ENCODE measurements at regions of chr19 and their contacts with region 1.

Region 1: DNA sequence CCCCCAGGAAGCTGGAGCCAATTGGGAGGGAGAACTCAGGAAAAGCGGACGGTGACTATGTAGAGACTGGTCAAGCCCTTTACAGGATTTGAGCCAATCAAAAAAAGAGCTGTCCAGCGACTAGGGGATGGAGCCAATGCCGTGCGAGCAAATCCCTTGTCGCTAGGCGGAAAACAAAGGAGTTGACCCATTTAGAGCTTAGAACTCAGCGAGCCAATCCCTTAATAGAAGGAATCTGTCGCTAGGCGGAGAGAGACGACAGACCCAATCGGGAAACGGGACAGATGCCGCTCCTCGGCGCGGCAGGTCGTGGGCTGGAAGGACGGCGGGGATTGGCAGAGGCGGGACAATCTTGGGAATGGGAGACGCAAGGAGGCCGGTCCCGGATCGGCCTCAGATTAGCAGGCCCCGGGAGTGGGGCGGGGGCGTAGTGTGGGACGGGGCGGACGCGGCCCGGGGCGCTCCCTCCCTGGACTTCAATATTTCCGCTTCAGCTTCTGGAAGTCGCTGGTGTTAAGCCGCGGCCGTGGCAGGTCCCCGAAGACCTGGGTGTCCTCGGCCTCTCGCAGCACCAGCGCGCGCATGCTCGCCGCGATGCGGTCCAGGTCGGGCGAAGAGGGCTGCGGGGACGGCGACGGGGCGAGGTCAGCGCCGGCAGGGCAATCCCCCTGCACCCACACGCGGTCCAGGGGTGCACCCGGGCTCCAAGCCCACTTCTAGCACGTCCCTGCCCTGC is 2.2 kb upstream of the PNKP start:
- DNase-seq: peak; percentile 97
- H3K4me3 ChIP-seq: peak overlapping the region; percentile 55
- H3K27ac ChIP-seq: peak overlapping the region; percentile 91
- H3K4me1 ChIP-seq: peaks cover 22% of the 10 kb centered on the region
- H3K27me3 ChIP-seq: no peaks in the 10 kb centered on the region
- CTCF ChIP-seq: no peak

Region 2: DNA sequence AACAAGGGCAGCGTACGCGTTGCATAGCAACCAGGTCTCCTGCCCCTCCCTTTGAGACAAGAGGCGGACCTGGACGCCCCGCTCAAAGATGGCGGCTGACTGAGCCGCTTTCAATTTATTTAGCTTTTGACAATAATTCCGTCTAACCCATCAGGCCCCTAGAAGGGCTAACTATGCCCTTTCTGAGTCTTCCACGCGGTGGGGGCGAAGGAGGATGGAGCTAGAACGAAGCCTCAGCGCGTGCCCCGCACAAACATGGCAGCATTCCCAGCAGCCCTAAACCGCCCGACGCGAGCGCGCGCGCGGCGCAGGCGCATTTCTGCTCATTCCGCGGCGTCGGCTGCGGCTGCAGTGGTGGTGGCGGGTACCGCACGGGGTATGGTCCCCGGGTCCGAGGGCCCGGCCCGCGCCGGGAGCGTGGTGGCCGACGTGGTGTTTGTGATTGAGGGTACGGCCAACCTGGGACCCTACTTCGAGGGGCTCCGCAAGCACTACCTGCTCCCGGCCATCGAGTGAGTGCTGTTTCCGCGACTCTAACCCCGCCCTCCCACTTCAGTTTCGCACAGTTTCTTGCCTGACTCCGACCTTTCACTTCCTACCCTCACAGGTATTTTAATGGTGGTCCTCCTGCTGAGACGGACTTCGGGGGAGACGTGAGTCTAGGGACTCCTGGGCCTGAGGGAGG is 51.5 kb before region 1 on chr19 and contains the start of gene MED25:
- intact Hi-C with region 1: loop called (anchors 10 kb)
- DNase-seq: peak; percentile 88
- H3K4me3 ChIP-seq: peak within 1 kb of the TSS; percentile 63
- H3K27ac ChIP-seq: peak within 1 kb of the TSS; percentile 91
- H3K4me1 ChIP-seq: no peaks in the 10 kb centered on the region
- H3K27me3 ChIP-seq: no peaks in the 10 kb centered on the region
- CTCF ChIP-seq: no peak
- total RNA-seq, gene MED25: 46.1 to 77.2 TPM

Region 3: GRCh38 chr19:49983645-49984229 is 114.1 kb after region 1 on chr19:
- intact Hi-C with region 1: no loop called
- DNase-seq: peak; percentile 74
- H3K4me3 ChIP-seq: no peak overlapping the region
- H3K27ac ChIP-seq: no peak overlapping the region
- H3K4me1 ChIP-seq: no peaks in the 10 kb centered on the region
- H3K27me3 ChIP-seq: no peaks in the 10 kb centered on the region
- CTCF ChIP-seq: peak; percentile 90